ENCODE measurements at regions of chr3 and their contacts with region 1.

Region 1: GRCh38 chr3:186259612-186260383 is 102.2 kb downstream of the DGKG start:
- DNase-seq: peak; percentile 78
- H3K4me3 Mint-ChIP-seq: peak overlapping the region; percentile 51
- H3K27ac Mint-ChIP-seq: peak overlapping the region; percentile 37
- H3K4me1 Mint-ChIP-seq: peaks cover 30% of the 10 kb centered on the region
- H3K27me3 Mint-ChIP-seq: peaks cover 2% of the 10 kb centered on the region

Region 2: GRCh38 chr3:186217820-186218164 is 42.0 kb before region 1 on chr3:
- CTCF ChIA-PET with region 1: interaction called, 10 read pairs
- intact Hi-C with region 1: no loop called
- DNase-seq: peak; percentile 30
- H3K4me3 Mint-ChIP-seq: no peak overlapping the region
- H3K27ac Mint-ChIP-seq: no peak overlapping the region
- H3K4me1 Mint-ChIP-seq: peaks cover 14% of the 10 kb centered on the region
- H3K27me3 Mint-ChIP-seq: peaks cover 3% of the 10 kb centered on the region

Region 3: GRCh38 chr3:186487819-186488218 is 228.0 kb after region 1 on chr3:
- CTCF ChIA-PET with region 1: no interaction called
- intact Hi-C with region 1: loop called (anchors 5 kb)
- DNase-seq: no peak
- H3K4me3 Mint-ChIP-seq: no peak overlapping the region
- H3K27ac Mint-ChIP-seq: no peak overlapping the region
- H3K4me1 Mint-ChIP-seq: peaks cover 13% of the 10 kb centered on the region
- H3K27me3 Mint-ChIP-seq: no peaks in the 10 kb centered on the region

Region 4: GRCh38 chr3:186534113-186534669 is 274.4 kb after region 1 on chr3:
- CTCF ChIA-PET with region 1: interaction called, 96 read pairs
- intact Hi-C with region 1: loop called (anchors 1 kb)
- DNase-seq: peak; percentile 76
- H3K4me3 Mint-ChIP-seq: peak overlapping the region; percentile 61
- H3K27ac Mint-ChIP-seq: peak overlapping the region; percentile 97
- H3K4me1 Mint-ChIP-seq: peaks cover 94% of the 10 kb centered on the region
- H3K27me3 Mint-ChIP-seq: no peaks in the 10 kb centered on the region

Region 5: GRCh38 chr3:186821429-186822367 is 561.9 kb after region 1 on chr3:
- CTCF ChIA-PET with region 1: no interaction called
- intact Hi-C with region 1: loop called (anchors 5 kb)
- DNase-seq: peak; percentile 12
- H3K4me3 Mint-ChIP-seq: no peak overlapping the region
- H3K27ac Mint-ChIP-seq: no peak overlapping the region
- H3K4me1 Mint-ChIP-seq: peaks cover 25% of the 10 kb centered on the region
- H3K27me3 Mint-ChIP-seq: peaks cover 12% of the 10 kb centered on the region

Measured in activated naive CD4-positive, alpha-beta T cell treated with anti-CD3 and anti-CD28 coated beads for 36 hours (primary cell).